Posterior cingulate gyrus (tissue), 11 donors: ENCODE measurements at regions of chr4 and their contacts with region 1.

Region 1: GRCh38 chr4:140326395-140326993 is 47.0 kb upstream of the SCOC start:
- DNase-seq: peak in 5 of 10 donors; percentile 14 to 87 (median 50)

Region 2: GRCh38 chr4:140012688-140013486 is 313.6 kb before region 1 on chr4:
- intact Hi-C with region 1: loop called (anchors 1 kb)
- DNase-seq: peak in 6 of 10 donors; percentile 15 to 85 (median 51)

Region 3: DNA sequence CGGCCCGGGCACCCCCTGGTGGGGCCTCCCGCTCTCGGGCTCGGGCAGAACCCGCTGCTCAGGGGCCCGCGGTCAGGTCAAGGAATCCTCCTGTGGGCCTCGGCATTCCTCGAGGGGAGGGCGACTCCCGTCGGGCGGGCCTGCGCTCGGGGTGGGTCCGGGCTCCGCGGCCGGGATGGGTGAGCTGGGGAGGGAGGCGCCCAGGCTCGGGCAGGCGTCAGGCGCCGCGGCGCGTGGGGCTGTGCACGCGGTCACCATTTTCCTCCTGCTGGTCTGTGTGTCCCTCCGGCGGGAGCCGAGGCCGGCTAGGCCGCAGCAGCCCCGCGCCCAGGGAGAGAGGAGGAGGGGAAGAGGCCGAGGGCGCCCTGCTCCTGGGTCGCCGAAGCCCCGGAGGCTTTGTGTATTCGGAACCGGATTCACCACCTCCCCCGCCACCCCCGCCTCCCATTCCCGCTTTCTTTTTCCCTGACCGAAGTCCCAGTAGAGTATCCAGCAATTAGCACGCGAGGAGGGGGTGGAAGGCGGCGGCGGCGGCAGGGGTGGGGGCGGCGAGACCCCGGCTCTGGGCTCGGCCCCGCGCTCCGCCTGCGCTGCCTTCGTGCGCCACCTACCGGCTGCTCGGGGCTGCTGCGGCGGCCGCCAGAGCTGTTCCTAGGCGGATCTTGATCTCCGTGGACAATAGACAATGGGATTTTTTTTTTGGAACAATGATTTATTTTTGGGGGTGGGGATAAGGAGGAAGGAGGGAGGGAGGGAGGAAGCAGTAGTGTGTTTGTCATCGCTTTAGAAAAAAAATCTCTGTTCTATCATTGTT is 73.5 kb before region 1 on chr4:
- intact Hi-C with region 1: loop called (anchors 2 kb)
- DNase-seq: peak; percentile 65 to 97 (median 78)